ENCODE measurements at regions of chr22 and their contacts with region 1.

Region 1: GRCh38 chr22:50209893-50210292 is 9.1 kb downstream of the SELENOO start:
- DNase-seq: peak; percentile 80 to 88
- ATAC-seq: peak; percentile 61
- H3K4me3 ChIP-seq: no peak overlapping the region
- H3K27ac ChIP-seq: no peak overlapping the region
- H3K4me1 ChIP-seq: no peaks in the 10 kb centered on the region
- H3K27me3 ChIP-seq: no peaks in the 10 kb centered on the region

Region 2: DNA sequence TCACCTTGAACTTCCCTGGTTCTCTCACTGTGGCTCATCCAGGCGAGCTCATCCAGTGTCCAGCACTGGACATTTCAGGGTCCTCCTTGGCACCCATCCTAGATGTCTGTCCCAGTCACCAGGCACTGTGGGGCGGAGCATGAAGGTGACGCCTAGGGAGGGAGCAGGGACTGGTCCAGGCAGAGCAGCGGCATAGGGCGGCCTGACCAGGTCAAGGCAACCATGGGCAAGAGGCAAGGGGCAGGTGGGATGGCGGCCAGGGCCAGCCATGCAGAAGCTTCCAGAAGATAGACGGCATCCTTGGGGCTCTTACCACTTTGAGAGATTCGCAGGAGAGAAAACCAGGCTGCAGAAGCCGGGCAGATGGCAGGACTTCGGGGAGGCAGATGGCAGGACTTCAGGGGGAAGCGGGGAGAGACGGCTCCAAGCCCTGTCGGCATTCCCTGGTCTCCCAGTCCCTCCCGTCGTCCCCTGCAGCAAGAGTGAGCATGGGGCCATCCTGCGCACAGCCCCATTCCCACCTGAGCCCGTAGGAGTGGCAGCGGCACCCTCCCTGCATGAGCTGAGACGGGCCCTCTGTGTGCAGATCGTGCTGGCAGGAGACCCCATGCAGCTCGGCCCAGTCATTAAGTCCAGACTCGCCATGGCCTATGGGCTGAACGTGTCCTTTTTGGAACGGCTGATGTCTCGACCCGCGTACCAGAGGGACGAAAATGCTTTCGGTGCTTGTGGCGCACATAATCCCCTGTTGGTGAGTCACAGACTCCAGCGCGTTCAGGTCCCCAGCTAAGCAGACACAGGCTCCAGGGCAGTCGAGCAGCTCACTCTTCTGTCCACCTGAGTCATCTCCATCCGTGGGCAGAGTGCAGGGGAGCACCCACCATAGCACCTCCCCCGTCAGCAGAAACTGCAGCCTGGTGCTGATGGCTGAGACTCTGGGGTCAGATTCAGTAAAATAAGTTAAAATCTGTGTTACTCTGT is 59.5 kb before region 1 on chr22:
- intact Hi-C with region 1: loop called in 1 of 2 experiments (anchors 5 kb)
- DNase-seq: no peak
- ATAC-seq: no peak
- H3K4me3 ChIP-seq: no peak overlapping the region
- H3K27ac ChIP-seq: no peak overlapping the region
- H3K4me1 ChIP-seq: no peaks in the 10 kb centered on the region
- H3K27me3 ChIP-seq: no peaks in the 10 kb centered on the region

Region 3: DNA sequence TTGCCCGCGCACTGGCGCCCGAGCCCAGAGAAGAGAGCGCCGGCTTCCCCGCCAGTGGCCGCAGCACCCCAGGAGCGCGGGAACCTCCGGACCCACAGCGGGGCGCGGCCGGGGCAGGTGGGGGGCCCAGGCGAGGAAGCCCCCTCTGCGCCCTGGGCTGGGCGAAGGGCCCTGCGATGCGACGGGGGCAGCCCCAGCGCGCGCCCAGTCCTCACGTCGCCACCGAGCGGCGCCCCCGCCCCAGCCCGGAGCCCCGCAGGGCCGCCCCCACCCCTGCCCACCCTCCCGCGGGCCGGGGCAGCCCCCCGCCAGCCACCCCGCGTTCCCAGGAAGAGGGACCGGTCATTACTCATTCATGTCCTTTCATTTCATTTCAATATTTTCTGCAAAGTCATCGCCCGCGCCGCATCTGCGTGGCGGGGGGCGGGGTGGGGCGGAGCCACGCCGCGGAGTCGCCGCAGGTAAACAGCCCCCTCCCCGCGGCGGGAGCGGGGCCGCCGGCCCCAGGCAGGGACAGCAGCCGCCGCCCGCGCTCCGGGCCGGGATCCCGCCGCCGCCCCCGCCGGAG is 40.0 kb before region 1 on chr22:
- intact Hi-C with region 1: no loop called
- DNase-seq: peak in 1 of 2 donors; percentile 52
- ATAC-seq: peak; percentile 8
- H3K4me3 ChIP-seq: peak overlapping the region; percentile 57 to 59
- H3K27ac ChIP-seq: no peak overlapping the region
- H3K4me1 ChIP-seq: no peaks in the 10 kb centered on the region
- H3K27me3 ChIP-seq: no peaks in the 10 kb centered on the region